Activated CD4-positive, alpha-beta T cell treated with anti-CD3 and anti-CD28 coated beads, Interleukin-2, amount 10 ng/mL, durations not matched to agents 24 days and 14 days (primary cell): ENCODE measurements at regions of chr2 and their contacts with region 1.

Region 1: DNA sequence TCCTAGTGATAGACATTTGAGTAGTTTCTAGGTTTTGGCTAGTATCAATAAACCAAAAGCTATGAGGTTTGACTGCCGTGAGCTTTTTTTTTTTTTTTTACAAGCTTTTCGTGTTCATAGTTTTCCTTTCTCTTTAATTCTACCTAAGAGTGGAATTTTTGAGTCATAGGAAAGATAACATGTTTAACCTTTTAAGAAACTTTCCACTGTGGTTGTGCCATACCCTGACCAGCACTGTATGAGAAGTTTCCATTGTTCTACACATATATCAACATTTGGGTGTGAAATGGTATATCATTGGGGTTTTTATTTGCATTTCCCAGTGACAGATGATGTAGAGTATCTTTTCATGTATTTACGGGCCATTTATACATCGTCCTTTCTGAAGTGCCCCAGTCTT is 31.7 kb downstream of the UBE2F start:
- DNase-seq: peak; percentile 80
- H3K4me3 Mint-ChIP-seq: peak overlapping the region; percentile 69
- H3K27ac Mint-ChIP-seq: peak overlapping the region; percentile 97
- H3K4me1 Mint-ChIP-seq: peaks cover 44% of the 10 kb centered on the region
- H3K27me3 Mint-ChIP-seq: peaks cover 2% of the 10 kb centered on the region

Region 2: DNA sequence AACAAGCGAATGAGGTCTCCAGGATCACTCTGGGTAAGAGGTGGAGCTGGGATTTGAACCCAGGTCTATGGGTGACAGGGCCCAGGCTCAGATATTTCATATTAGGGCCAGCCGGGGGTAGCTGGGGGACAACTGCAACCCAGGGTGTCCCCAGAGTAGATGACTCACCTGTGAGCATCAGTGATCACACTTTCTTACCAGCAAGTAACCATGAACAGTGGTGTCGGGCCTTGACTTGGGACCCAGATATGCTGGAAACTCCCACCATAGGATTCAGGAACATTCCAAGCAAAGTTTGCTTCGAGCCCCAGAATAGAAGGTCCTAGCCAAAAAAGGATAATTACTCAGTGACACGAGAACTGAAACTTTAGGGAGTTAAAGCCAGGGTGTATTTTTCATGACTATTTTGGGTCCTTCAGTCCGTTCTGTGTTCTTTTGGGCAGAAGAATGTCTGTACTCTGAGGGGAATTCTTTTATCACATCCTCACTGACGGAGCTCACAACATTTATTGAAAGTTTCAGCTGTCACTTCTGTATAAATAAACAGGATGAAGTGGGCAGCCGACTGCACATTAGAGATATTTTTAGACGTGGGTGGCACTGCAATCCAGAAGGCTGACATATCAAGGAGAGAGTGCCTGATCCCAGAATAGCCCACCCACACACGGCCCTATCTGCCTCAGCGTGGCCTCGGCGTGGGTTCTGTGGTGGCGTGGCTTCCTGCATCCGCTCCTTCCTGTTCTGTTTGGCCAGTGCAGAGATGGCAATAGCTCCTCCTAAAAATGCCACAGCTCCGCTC is 93.5 kb before region 1 on chr2:
- intact Hi-C with region 1: loop called (anchors 2 kb)
- DNase-seq: peak; percentile 72
- H3K4me3 Mint-ChIP-seq: peak overlapping the region; percentile 74
- H3K27ac Mint-ChIP-seq: peak overlapping the region; percentile 94
- H3K4me1 Mint-ChIP-seq: peaks cover 40% of the 10 kb centered on the region
- H3K27me3 Mint-ChIP-seq: no peaks in the 10 kb centered on the region

Region 3: DNA sequence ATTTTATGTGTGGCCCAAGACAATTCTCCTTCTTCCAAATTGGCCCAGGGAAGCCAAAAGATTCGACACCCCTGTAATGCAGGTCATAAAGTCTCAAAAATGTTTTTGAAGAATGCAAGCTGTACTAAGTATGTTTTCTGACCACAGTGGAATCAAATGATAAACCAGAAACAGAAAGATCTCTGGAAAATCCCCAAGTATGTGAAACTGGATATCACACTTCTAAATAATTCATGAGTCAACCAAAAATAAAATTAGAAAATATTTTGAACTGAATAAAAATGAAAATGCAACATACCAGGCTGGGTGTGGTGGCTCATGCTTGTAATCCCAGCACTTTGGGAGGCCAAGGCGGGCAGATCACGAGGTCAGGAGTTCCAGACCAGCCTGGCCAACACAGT is 65.8 kb before region 1 on chr2:
- intact Hi-C with region 1: loop called (anchors 2 kb)
- DNase-seq: no peak
- H3K4me3 Mint-ChIP-seq: no peak overlapping the region
- H3K27ac Mint-ChIP-seq: peak overlapping the region; percentile 81
- H3K4me1 Mint-ChIP-seq: peaks cover 23% of the 10 kb centered on the region
- H3K27me3 Mint-ChIP-seq: no peaks in the 10 kb centered on the region

Region 4: DNA sequence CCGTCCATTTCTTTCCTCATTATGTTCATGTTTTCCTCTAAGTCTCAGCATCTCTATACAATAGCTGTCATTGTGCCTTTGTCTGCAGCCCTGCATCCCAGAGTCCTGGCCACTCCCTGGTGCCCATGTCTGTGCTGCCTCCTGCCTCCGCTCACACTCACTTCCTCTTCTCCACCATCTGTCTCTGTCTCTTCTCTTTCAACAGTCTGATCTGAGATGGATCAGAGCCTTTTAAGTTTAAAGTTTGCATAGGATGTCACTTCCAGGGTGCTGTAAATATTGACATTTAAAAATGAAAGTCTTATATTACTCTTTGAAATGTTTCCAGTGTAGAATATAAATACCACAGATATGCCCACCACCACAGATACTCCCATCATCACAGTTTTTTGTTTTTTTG is 11.0 kb after region 1 on chr2:
- intact Hi-C with region 1: loop called (anchors 1 kb)
- DNase-seq: no peak
- H3K4me3 Mint-ChIP-seq: peak overlapping the region; percentile 67
- H3K27ac Mint-ChIP-seq: peak overlapping the region; percentile 92
- H3K4me1 Mint-ChIP-seq: peaks cover 48% of the 10 kb centered on the region
- H3K27me3 Mint-ChIP-seq: no peaks in the 10 kb centered on the region

Region 5: GRCh38 chr2:238060542-238061314 is 62.2 kb after region 1 on chr2 and contains the start of gene SCLY:
- intact Hi-C with region 1: loop called (anchors 2 kb)
- DNase-seq: peak; percentile 98
- H3K4me3 Mint-ChIP-seq: peak within 1 kb of the TSS; percentile 91
- H3K27ac Mint-ChIP-seq: peak within 1 kb of the TSS; percentile 95
- H3K4me1 Mint-ChIP-seq: peaks cover 44% of the 10 kb centered on the region
- H3K27me3 Mint-ChIP-seq: peaks cover 6% of the 10 kb centered on the region
- total RNA-seq, gene SCLY: 109 TPM in 2 replicates

Region 6: GRCh38 chr2:238077292-238077691 is 78.8 kb after region 1 on chr2:
- intact Hi-C with region 1: no loop called
- DNase-seq: no peak
- H3K4me3 Mint-ChIP-seq: no peak overlapping the region
- H3K27ac Mint-ChIP-seq: no peak overlapping the region
- H3K4me1 Mint-ChIP-seq: peaks cover 13% of the 10 kb centered on the region
- H3K27me3 Mint-ChIP-seq: no peaks in the 10 kb centered on the region